Dendritic cell treated with granulocyte-macrophage colony-stimulating factor and Interleukin-4, amounts not matched to agents 40 ng/mL and 50 ng/mL, for 4 days (primary cell): ENCODE measurements at regions of chr10 and their contacts with region 1.

Region 1: DNA sequence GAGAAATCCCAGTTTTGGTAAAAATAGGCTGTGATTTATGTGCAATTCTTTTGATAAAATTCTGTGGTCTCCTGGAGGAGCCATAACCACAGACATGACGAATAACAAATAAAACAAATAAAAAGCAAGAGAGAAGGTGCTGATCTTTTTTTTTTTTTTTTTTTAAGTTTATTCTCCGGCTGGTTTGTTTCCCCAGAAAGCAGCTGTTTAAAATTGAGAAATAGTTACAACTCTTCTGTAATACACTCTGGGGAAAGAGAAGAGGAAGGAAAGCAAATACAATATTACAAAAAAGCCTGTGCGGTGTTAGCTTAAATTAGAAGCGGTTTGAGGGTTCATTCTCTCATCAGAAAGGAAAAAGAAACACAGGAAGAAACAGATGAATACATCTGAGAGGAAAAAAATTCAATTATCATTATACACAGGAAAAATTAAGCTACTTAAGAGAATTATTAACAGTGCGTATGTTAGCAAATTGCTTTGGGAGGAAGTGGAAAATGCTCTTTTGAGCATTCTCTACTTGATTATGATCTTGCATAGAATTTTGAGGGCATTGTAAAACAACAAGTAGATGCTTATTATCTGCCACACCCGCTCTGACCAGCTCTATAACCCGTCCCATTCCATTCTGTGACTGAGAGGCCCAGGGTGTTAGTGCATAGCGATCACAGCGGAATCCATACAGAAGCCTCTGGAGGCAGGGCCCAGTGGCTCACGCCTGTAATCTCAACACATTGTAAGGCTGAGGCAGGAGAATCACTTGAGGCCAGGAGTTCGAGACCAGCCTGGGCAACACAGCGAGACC is 40.6 kb upstream of the WAC start:
- H3K4me3 Mint-ChIP-seq: peak overlapping the region; percentile 66
- H3K27ac Mint-ChIP-seq: peak overlapping the region; percentile 98
- H3K4me1 Mint-ChIP-seq: peaks cover 79% of the 10 kb centered on the region
- H3K27me3 Mint-ChIP-seq: no peaks in the 10 kb centered on the region

Region 2: DNA sequence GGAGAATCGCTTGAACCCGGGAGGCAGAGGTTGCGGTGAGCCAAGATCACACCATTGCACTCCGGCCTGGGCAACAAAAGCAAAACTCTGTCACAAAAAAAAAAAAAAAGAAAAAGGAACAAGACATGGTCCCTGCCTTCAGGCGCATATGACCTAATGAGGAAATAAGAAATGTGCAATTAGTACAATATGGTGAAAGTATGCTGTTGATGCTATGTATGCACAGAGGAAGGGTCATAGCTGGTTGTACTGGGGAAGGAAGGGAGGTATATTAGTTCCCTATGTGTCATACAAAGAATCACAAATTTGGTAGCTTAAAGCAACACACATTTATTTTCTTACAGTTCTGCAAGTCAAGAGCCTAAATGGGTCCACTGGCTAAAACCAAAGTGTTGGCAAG is 91.6 kb before region 1 on chr10:
- intact Hi-C with region 1: loop called (anchors 5 kb)
- H3K4me3 Mint-ChIP-seq: no peak overlapping the region
- H3K27ac Mint-ChIP-seq: peak overlapping the region; percentile 78
- H3K4me1 Mint-ChIP-seq: peaks cover 69% of the 10 kb centered on the region
- H3K27me3 Mint-ChIP-seq: no peaks in the 10 kb centered on the region

Region 3: GRCh38 chr10:28532383-28533175 is 40.3 kb after region 1 on chr10 and contains the start of gene WAC:
- intact Hi-C with region 1: loop called (anchors 1 kb)
- H3K4me3 Mint-ChIP-seq: peak within 1 kb of the TSS; percentile 99
- H3K27ac Mint-ChIP-seq: peak within 1 kb of the TSS; percentile 100
- H3K4me1 Mint-ChIP-seq: peaks cover 51% of the 10 kb centered on the region
- H3K27me3 Mint-ChIP-seq: no peaks in the 10 kb centered on the region

Region 4: GRCh38 chr10:29857843-29858701 is 1365.8 kb after region 1 on chr10:
- intact Hi-C with region 1: no loop called
- H3K4me3 Mint-ChIP-seq: peak overlapping the region; percentile 24
- H3K27ac Mint-ChIP-seq: peak overlapping the region; percentile 58
- H3K4me1 Mint-ChIP-seq: peaks cover 21% of the 10 kb centered on the region
- H3K27me3 Mint-ChIP-seq: peaks cover 2% of the 10 kb centered on the region